ENCODE measurements at regions of chr4 and their contacts with region 1.

Region 1: GRCh38 chr4:142379277-142380057 is 466.6 kb downstream of the INPP4B start:
- DNase-seq: no peak
- H3K4me3 ChIP-seq: no peak overlapping the region
- H3K4me3 Mint-ChIP-seq: peak overlapping the region in 5 of 8 donors; percentile 17 to 72 (median 60)
- H3K27ac ChIP-seq: no peak overlapping the region
- H3K27ac Mint-ChIP-seq: peak overlapping the region; percentile 31 to 92 (median 76)
- H3K4me1 ChIP-seq: peaks cover 84% of the 10 kb centered on the region
- H3K4me1 Mint-ChIP-seq: peaks cover 64 to 85% (median 74%) of the 10 kb centered on the region in 4 donors
- H3K27me3 ChIP-seq: no peaks in the 10 kb centered on the region
- H3K27me3 Mint-ChIP-seq: no peaks in the 10 kb centered on the region

Region 2: GRCh38 chr4:142248946-142249345 is 130.5 kb before region 1 on chr4:
- CTCF ChIA-PET with region 1: no interaction called
- POLR2A ChIA-PET with region 1: no interaction called
- intact Hi-C with region 1: no loop called
- DNase-seq: no peak
- H3K4me3 ChIP-seq: no peak overlapping the region
- H3K4me3 Mint-ChIP-seq: no peak overlapping the region
- H3K27ac ChIP-seq: no peak overlapping the region
- H3K27ac Mint-ChIP-seq: no peak overlapping the region
- H3K4me1 ChIP-seq: no peaks in the 10 kb centered on the region
- H3K4me1 Mint-ChIP-seq: peaks cover 16 to 34% (median 19%) of the 10 kb centered on the region in 4 donors
- H3K27me3 ChIP-seq: no peaks in the 10 kb centered on the region
- H3K27me3 Mint-ChIP-seq: no peaks in the 10 kb centered on the region

Region 3: GRCh38 chr4:142358656-142359055 is 20.8 kb before region 1 on chr4:
- CTCF ChIA-PET with region 1: interaction called, 24 read pairs
- POLR2A ChIA-PET with region 1: interaction called, 50 read pairs
- intact Hi-C with region 1: no loop called
- DNase-seq: no peak
- H3K4me3 ChIP-seq: no peak overlapping the region
- H3K4me3 Mint-ChIP-seq: peak overlapping the region; percentile 6 to 72 (median 37)
- H3K27ac ChIP-seq: no peak overlapping the region
- H3K27ac Mint-ChIP-seq: peak overlapping the region; percentile 65 to 96 (median 76)
- H3K4me1 ChIP-seq: peaks cover 89% of the 10 kb centered on the region
- H3K4me1 Mint-ChIP-seq: peaks cover 76 to 90% (median 84%) of the 10 kb centered on the region in 4 donors
- H3K27me3 ChIP-seq: no peaks in the 10 kb centered on the region
- H3K27me3 Mint-ChIP-seq: no peaks in the 10 kb centered on the region

Region 4: DNA sequence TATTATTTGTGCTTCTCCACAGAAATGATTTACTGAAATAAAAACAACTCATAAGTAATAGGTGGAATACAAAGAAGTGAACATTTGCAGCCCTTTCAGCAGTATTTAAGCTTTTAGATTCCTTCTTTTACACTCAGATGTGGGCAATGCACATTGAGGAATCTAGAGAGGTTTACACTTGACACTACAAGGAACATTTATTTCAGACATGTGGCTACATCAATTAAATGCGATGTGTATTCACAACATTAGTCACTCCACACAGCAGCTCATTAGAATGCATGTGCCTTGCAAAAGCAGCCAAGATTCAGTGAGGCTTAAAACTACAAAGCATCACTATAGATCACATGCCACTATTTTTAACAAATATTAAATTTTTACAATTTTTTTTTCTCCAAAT is 14.1 kb before region 1 on chr4:
- CTCF ChIA-PET with region 1: interaction called, 21 read pairs
- POLR2A ChIA-PET with region 1: interaction called, 15 read pairs
- intact Hi-C with region 1: loop called (anchors 1 kb)
- DNase-seq: no peak
- H3K4me3 ChIP-seq: no peak overlapping the region
- H3K4me3 Mint-ChIP-seq: peak overlapping the region in 5 of 8 donors; percentile 22 to 69 (median 49)
- H3K27ac ChIP-seq: no peak overlapping the region
- H3K27ac Mint-ChIP-seq: peak overlapping the region in 6 of 7 donors; percentile 6 to 86 (median 72)
- H3K4me1 ChIP-seq: peaks cover 87% of the 10 kb centered on the region
- H3K4me1 Mint-ChIP-seq: peaks cover 67 to 84% (median 74%) of the 10 kb centered on the region in 4 donors
- H3K27me3 ChIP-seq: no peaks in the 10 kb centered on the region
- H3K27me3 Mint-ChIP-seq: no peaks in the 10 kb centered on the region

Region 5: DNA sequence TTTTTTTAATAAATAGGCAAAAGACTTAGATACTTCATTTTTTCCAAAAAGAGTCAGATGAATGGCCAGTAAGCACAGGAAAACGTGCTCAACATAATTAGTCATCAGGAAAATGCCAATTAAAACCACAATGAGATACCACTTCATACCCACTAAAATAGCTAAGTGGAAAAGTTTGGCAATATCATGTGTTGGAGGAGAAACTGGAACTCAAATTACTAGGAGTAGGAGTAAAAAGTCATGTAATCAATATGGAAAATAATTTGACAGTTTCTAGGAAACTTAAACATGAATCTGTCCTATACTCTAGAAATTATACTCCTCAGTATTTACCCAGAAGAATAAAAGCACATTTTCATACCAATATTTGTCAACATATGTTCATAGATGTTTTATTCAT is 16.8 kb after region 1 on chr4:
- CTCF ChIA-PET with region 1: interaction called, 4 read pairs
- POLR2A ChIA-PET with region 1: interaction called, 122 read pairs
- intact Hi-C with region 1: no loop called
- DNase-seq: no peak
- H3K4me3 ChIP-seq: peak overlapping the region in 1 of 2 donors; percentile 12
- H3K4me3 Mint-ChIP-seq: peak overlapping the region; percentile 73 to 88 (median 83)
- H3K27ac ChIP-seq: peak overlapping the region; percentile 47
- H3K27ac Mint-ChIP-seq: peak overlapping the region; percentile 62 to 98 (median 86)
- H3K4me1 ChIP-seq: peaks cover 77% of the 10 kb centered on the region
- H3K4me1 Mint-ChIP-seq: peaks cover 59 to 88% (median 72%) of the 10 kb centered on the region in 4 donors
- H3K27me3 ChIP-seq: no peaks in the 10 kb centered on the region
- H3K27me3 Mint-ChIP-seq: no peaks in the 10 kb centered on the region

Region 6: DNA sequence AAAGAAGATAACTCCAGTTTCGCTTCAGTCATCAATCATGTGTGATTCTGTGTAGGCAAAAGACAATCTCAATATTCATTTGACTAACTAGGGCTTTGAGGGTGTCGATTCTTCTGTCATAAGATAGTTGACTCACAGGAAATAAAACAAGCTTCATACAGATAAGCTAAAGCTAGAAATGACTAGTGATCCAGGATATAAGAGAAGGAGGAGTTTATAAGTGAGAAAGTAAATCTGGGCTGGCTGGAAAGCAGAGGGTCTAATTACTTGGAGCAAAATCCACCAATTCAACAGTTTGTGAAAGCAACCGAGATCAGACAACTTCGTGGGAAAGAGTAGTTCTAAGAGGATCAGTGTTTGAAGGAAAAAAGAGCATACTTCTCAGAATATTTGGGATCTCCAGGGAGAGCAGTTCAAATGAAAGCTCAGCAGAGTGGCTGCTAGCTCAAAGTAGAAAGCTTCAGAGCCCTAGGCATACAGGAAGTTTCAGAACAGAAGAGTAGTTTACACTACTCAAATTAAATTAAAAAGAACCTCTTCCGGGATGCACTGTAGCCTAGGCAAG is 37.3 kb after region 1 on chr4:
- CTCF ChIA-PET with region 1: interaction called, 4 read pairs
- POLR2A ChIA-PET with region 1: interaction called, 22 read pairs
- intact Hi-C with region 1: no loop called
- DNase-seq: peak; percentile 39 to 62 (median 48)
- H3K4me3 ChIP-seq: peak overlapping the region; percentile 11 to 33
- H3K4me3 Mint-ChIP-seq: peak overlapping the region; percentile 71 to 90 (median 84)
- H3K27ac ChIP-seq: peak overlapping the region; percentile 70
- H3K27ac Mint-ChIP-seq: peak overlapping the region; percentile 77 to 95 (median 92)
- H3K4me1 ChIP-seq: peaks cover 42% of the 10 kb centered on the region
- H3K4me1 Mint-ChIP-seq: peaks cover 29 to 48% (median 33%) of the 10 kb centered on the region in 4 donors
- H3K27me3 ChIP-seq: no peaks in the 10 kb centered on the region
- H3K27me3 Mint-ChIP-seq: no peaks in the 10 kb centered on the region